Activated T-helper 2 cell treated with anti-CD3 and anti-CD28 coated beads, Interferon-gamma antibody, Interleukin-2, Interleukin-4, amounts not matched to agents 10 μg/mL and 5 μg/mL and 100 μg/mL, durations not matched to agents 14 hours and 24 hours and 36 hours (primary cell): ENCODE measurements at regions of chr7 and their contacts with region 1.

Region 1: DNA sequence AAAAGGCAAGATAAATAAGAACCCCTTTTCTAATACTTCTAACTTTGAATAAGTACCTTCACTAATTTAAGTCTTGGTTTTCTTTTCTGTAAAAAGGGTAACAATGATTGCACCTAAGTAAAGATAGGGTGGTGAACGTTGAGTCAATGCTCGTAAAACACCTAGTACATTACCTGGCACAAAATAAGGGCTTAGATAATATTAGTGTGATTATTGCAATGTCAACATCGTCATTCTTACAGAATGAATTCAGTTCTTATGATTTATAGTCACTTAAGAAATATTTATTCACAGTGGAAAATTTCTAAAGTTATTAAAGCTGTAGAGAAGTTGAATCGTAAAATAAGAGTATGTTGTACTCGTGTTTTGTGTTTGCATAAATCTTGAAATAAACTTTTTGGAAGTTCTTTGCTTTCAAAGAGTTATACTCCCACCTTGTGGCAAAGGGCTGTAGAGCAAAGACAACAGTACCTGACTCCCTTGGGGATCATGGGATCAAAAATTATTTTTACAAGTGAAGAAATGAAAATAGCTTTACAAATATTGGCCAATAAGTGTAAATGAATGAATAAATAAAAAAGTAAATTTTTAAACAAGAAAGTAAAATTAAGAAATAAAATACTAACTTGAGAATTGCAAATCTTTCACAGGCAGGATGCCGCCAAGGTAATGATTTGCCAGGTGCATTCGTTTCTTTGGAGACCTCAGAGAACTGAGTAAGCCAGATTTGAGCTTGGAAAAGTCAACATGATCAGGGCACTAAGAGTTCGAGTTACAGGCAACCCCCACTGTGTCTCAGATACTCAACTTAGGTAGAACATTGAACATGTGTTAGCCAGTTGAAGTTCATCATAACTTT is 285.8 kb upstream of the CACNA2D1 start:
- DNase-seq: no peak
- H3K4me3 Mint-ChIP-seq: no peak overlapping the region
- H3K27ac Mint-ChIP-seq: no peak overlapping the region
- H3K4me1 Mint-ChIP-seq: no peaks in the 10 kb centered on the region
- H3K27me3 Mint-ChIP-seq: no peaks in the 10 kb centered on the region

Region 2: DNA sequence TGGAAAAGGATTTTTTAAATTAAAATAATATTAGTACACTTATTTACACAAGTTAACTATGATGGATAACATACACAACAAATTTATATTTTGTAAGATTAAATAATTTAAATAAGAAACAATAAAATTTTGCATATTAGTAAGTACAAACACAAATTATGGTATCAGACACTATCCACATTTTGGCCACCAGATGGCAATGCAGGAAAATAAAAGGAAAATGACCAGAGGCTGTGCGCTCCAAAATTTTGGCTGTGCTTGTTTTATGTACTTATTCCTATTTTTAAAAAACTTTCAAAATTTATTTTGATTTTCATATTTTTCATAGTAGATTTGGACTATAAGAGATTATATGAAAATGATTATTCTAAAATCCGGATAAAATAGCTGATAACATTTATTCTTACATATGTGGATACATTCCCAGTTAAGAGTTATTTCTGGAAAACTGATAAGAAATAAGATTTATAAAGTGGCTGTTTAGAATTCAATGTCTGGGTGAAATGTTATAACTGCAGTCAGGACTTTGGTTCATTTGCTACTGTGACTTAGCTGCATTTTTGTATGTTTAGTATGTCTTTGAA is 684.8 kb before region 1 on chr7:
- intact Hi-C with region 1: loop called (anchors 10 kb)
- DNase-seq: no peak
- H3K4me3 Mint-ChIP-seq: no peak overlapping the region
- H3K27ac Mint-ChIP-seq: no peak overlapping the region
- H3K4me1 Mint-ChIP-seq: no peaks in the 10 kb centered on the region
- H3K27me3 Mint-ChIP-seq: no peaks in the 10 kb centered on the region

Region 3: GRCh38 chr7:82600531-82600930 is 128.9 kb before region 1 on chr7:
- intact Hi-C with region 1: loop called (anchors 5 kb)
- DNase-seq: no peak
- H3K4me3 Mint-ChIP-seq: no peak overlapping the region
- H3K27ac Mint-ChIP-seq: no peak overlapping the region
- H3K4me1 Mint-ChIP-seq: no peaks in the 10 kb centered on the region
- H3K27me3 Mint-ChIP-seq: no peaks in the 10 kb centered on the region

Region 4: DNA sequence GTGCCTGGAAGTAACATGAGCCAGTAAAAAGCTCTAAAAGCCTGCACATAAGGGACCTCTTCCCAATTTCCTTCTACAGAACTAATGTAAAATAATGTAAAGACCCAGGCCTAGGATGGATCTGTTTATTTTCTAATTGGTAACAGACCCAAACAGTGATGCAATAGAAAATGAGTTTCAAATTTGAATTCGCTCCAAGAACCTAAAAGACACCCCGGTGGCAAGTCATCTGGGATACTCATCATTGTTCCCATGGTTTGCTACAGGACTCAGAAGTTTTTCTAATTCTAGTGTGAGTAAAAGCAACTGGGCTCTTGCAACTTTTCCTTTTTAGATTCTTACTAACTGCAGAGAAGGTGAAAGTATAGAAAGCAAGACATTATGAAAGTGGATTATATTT is 14.5 kb before region 1 on chr7:
- intact Hi-C with region 1: no loop called
- DNase-seq: no peak
- H3K4me3 Mint-ChIP-seq: no peak overlapping the region
- H3K27ac Mint-ChIP-seq: no peak overlapping the region
- H3K4me1 Mint-ChIP-seq: no peaks in the 10 kb centered on the region
- H3K27me3 Mint-ChIP-seq: no peaks in the 10 kb centered on the region

Region 5: DNA sequence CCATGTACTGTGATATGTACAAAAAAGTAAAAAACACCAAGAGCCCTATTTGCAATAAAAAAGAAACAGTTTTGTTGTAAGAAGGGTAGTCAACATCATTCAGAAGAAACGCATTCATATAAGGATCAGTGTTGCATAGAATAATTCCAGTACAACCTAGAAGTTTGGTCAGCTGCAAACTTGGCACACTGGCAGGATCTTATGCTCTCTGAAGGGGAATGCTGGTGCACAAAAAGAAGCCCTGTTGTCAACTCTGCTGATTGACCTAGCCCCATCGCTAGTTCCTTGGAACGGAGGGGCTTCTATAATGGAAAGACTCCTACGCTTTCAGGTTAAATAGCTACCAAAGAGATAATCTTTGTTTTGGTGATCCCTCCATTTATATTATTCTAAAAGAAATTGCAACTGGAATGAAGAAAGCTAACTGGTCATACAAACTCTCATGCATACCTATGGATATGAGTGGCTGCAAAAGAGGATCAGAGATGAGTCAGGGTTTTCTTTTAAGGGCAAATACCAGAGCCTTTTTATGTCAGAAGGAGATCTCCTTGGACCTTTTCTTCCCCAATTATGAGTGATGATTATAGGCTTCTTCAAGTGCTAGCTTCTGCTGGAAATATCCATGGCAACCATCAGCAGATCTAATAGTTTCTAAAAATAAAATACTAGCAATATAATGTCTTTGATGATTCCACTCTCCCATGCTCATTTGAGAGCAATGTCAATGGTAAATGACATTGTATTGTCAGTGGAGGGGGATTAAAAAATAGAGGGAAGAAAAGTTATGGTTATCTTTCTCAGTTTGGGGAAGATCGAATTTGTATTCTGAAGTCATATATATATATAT is 26.5 kb after region 1 on chr7:
- intact Hi-C with region 1: no loop called
- DNase-seq: no peak
- H3K4me3 Mint-ChIP-seq: no peak overlapping the region
- H3K27ac Mint-ChIP-seq: no peak overlapping the region
- H3K4me1 Mint-ChIP-seq: no peaks in the 10 kb centered on the region
- H3K27me3 Mint-ChIP-seq: no peaks in the 10 kb centered on the region